Motor neuron (in vitro differentiated cells): ENCODE measurements at regions of chr12 and their contacts with region 1.

Region 1: DNA sequence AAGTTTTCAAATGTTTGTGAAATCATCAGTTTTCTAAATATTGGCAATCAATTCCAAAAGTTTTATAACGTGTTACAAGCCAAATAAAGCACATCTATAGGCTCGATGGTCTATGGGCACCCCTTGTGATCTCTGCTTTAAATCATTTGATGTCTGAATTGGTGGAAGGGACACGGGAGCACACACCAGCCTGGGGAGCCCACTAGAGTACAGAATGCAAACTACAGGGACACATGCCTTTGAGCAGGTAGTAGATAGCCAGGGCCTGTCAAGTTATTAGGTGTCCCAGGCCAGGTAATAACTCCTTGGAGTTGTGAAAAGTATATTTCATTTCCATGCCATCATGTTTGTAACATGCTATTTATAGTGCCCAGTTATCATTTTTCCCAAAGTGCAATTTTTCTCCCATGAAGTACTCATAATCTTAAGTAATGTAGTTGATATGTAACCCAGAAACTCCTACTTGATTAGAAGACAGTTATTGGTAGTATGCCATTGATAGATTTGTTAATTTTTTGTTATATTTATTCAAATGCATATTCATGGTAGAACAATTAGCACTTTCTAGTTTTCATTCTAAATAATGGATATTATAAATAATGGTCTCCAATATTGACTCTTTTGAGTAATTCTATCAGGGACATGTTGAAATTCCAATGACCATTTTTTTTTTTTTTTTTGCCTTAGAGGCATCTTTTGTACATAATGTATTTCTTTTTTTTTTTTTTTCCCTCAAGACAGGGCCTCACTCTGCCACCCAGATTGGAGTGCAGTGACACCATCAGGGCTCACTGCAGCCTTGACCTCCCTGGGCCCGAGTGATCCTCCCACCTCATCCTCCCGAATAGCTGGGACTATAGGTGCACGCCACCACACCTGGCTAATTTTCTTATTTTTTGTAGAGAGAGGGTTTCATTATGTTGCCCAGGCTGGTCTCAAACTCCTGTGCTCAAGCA is 96.9 kb upstream of the FGD4 start:
- ATAC-seq: peak in 4 of 8 experiments; percentile 47 to 66 (median 56)
- H3K4me3 ChIP-seq: no peak overlapping the region
- H3K27ac ChIP-seq: no peak overlapping the region
- H3K4me1 ChIP-seq: no peaks in the 10 kb centered on the region

Region 2: DNA sequence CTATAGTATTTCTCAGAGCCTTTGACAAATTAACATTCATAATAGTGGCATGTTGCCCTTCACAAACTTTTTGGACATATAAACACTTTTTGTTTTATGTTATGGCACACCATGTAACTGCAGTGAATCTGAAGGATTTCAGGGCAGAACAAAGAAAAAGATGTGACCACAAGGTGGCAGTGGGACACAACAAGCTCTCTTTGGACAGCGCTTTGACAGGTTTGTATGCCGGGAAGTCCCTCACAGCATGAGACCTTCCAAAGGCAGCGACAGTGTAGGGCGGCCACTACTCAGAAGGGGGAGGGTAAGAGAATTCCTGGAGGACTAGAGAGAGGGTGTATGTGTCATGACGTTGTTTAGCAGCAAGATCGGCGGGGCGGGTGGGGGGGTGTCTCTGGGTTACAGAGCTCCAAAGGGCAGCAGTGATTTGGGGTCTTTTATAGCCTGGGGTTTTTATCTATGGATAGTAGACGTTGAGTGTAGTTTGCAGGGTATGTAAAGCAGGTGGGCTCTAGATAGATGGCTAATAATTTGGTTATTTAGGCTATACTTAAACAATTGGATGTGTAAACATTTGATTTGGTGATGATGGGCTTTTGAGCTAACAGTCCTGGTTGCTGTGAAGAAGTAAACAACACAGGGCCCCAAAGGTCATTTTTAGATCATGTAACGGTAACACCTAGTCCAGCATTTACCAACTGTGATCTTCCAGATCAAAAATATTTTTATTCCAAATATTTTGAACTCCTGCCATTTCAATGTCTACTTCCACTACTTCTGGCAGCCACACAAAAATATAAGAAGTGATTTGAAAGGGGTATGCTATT is 620.1 kb before region 1 on chr12:
- in situ Hi-C with region 1: loop called in 1 of 9 experiments (anchors 25 kb)
- ATAC-seq: peak in 6 of 8 experiments; percentile 19 to 82 (median 54)
- H3K4me3 ChIP-seq: no peak overlapping the region
- H3K27ac ChIP-seq: no peak overlapping the region
- H3K4me1 ChIP-seq: no peaks in the 10 kb centered on the region

Region 3: GRCh38 chr12:32051559-32052414 is 250.7 kb before region 1 on chr12:
- in situ Hi-C with region 1: loop called in 3 of 9 experiments (anchors 10 to 25 kb)
- ATAC-seq: peak; percentile 29 to 96 (median 93)
- H3K4me3 ChIP-seq: no peak overlapping the region
- H3K27ac ChIP-seq: no peak overlapping the region
- H3K4me1 ChIP-seq: no peaks in the 10 kb centered on the region

Region 4: DNA sequence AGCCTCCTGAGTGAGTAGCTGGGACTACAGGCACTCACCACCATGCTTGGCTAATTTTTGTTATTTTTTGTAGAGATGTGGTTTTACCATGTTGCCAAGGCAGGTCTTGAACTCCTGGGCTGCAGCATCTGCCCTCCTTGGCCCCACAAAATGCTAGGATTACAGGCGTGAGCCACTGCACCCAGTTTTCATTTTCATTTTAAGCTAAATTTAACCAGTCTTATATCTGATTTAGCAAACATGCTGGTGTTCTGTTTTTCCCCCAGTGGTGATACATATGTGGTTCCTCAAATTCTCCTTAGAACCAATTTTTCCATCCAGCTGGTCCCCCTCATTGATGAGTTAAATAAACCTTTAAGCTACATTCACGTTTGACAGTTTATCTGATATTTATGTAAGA is 239.6 kb before region 1 on chr12:
- in situ Hi-C with region 1: loop called in 4 of 9 experiments (anchors 10 to 25 kb)
- ATAC-seq: no peak
- H3K4me3 ChIP-seq: no peak overlapping the region
- H3K27ac ChIP-seq: no peak overlapping the region
- H3K4me1 ChIP-seq: no peaks in the 10 kb centered on the region